ENCODE measurements at regions of chr7 and their contacts with region 1.

Region 1: GRCh38 chr7:80679921-80680907 is 41.8 kb downstream of the CD36 start:
- DNase-seq: no peak
- H3K4me3 ChIP-seq: no peak overlapping the region
- H3K27ac ChIP-seq: no peak overlapping the region
- H3K4me1 ChIP-seq: peaks cover 0 to 6% (median 0%) of the 10 kb centered on the region in 4 donors
- H3K27me3 ChIP-seq: no peaks in the 10 kb centered on the region
- CTCF ChIP-seq: no peak
- EP300 ChIP-seq: no peak
- POLR2A ChIP-seq: no peak

Region 2: GRCh38 chr7:79933144-79933543 is 747.1 kb before region 1 on chr7:
- in situ Hi-C with region 1: no loop called
- intact Hi-C with region 1: no loop called
- DNase-seq: no peak
- H3K4me3 ChIP-seq: no peak overlapping the region
- H3K27ac ChIP-seq: no peak overlapping the region
- H3K4me1 ChIP-seq: no peaks in the 10 kb centered on the region
- H3K27me3 ChIP-seq: no peaks in the 10 kb centered on the region
- CTCF ChIP-seq: no peak
- EP300 ChIP-seq: no peak
- POLR2A ChIP-seq: no peak

Region 3: DNA sequence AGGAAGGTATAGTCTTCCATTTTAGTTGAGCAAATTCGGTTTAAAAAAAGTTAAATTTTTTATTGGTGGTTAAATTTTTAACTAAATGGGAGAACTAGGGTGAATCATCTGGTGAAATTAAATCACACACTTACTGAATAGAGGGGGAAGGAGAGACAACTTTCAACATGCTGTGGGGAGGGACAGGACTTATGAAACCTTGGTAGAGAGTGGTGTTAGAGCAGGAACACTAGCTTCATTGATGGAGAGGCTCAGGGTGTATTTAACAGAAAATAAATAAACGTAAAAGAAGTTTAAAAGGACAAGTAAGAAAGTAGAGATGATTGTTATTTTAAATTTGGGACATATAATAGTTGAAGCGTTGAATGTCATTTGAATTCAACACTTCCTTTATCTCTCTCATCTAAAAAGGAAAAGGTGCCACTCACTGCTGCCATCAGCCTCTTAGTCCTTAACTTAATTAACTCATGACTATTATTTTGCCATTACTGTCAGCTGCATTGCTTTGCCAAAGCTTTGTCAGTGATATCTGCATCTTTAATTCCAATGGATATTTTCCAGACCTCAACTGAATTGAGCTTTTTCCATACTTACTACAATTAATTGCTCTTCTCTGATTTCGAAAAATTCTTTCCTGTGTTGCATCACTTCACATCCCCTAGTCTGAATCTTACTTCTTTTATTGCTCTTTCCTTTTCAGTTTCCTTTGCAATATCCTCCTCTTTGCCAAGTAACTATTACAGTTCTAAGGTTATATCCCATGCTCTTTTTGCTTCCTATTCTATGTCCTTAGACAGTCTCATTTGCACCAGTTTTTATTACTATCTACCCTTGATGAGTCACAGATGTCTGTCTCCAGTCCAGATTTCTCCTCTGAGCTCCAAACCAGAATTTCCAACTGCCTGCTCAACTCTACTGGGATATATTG is 240.1 kb before region 1 on chr7:
- in situ Hi-C with region 1: loop called in 1 of 4 experiments (anchors 10 kb)
- intact Hi-C with region 1: no loop called
- DNase-seq: no peak
- H3K4me3 ChIP-seq: no peak overlapping the region
- H3K27ac ChIP-seq: no peak overlapping the region
- H3K4me1 ChIP-seq: peaks cover 0 to 10% (median 1%) of the 10 kb centered on the region in 4 donors
- H3K27me3 ChIP-seq: no peaks in the 10 kb centered on the region
- CTCF ChIP-seq: no peak
- EP300 ChIP-seq: no peak
- POLR2A ChIP-seq: no peak

Region 4: GRCh38 chr7:80643336-80643915 is 36.8 kb before region 1 on chr7:
- in situ Hi-C with region 1: no loop called
- intact Hi-C with region 1: no loop called
- DNase-seq: no peak
- H3K4me3 ChIP-seq: no peak overlapping the region
- H3K27ac ChIP-seq: no peak overlapping the region
- H3K4me1 ChIP-seq: no peaks in the 10 kb centered on the region
- H3K27me3 ChIP-seq: no peaks in the 10 kb centered on the region
- CTCF ChIP-seq: no peak
- EP300 ChIP-seq: no peak
- POLR2A ChIP-seq: no peak